H1 (cell line): ENCODE measurements at regions of chr12 and their contacts with region 1.

Region 1: GRCh38 chr12:112108201-112109079 is at the start of gene NAA25:
- DNase-seq: peak; percentile 80 to 96
- H3K4me3 ChIP-seq: peak within 1 kb of the TSS; percentile 82 to 98 (median 88)
- H3K27ac ChIP-seq: peak within 1 kb of the TSS; percentile 85
- H3K4me1 ChIP-seq: peaks cover 10 to 21% (median 17%) of the 10 kb centered on the region in 4 experiments; a peak in 6 of 7 replicates
- H3K27me3 ChIP-seq: no peaks in the 10 kb centered on the region
- CTCF ChIP-seq: no peak
- EP300 ChIP-seq: no peak
- POLR2A ChIP-seq: peak; percentile 62 to 80; a peak in 1 of 3 replicates
- RAD21 ChIP-seq: no peak
- total RNA-seq, gene NAA25: 53.4 and 60.3 TPM in 2 replicates

Region 2: DNA sequence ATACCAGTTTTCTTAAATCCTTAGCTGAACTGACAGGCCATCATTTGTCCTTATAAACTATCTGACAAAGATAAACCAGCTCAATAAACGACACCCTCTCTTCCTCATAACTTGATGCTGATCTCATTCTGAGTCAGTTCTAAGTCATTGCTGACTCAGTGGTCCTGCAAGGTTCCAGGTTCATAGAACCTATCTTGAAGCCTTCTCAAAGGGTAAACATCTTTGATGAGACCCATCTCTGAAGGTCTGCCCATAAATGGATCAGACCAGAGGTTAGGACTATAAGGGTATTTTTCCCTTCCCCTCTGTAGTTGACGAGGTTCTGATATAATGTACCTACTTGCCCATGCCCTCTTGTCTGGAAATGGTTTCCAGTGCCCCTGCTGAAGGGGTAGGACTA is 11.8 kb before region 1 on chr12:
- CTCF ChIA-PET with region 1: no interaction called
- POLR2A ChIA-PET with region 1: interaction called, 44 read pairs
- DNase-seq: no peak
- H3K4me3 ChIP-seq: no peak overlapping the region
- H3K27ac ChIP-seq: no peak overlapping the region
- H3K4me1 ChIP-seq: no peaks in the 10 kb centered on the region
- H3K27me3 ChIP-seq: no peaks in the 10 kb centered on the region
- CTCF ChIP-seq: no peak
- EP300 ChIP-seq: no peak
- POLR2A ChIP-seq: no peak
- RAD21 ChIP-seq: no peak

Region 3: DNA sequence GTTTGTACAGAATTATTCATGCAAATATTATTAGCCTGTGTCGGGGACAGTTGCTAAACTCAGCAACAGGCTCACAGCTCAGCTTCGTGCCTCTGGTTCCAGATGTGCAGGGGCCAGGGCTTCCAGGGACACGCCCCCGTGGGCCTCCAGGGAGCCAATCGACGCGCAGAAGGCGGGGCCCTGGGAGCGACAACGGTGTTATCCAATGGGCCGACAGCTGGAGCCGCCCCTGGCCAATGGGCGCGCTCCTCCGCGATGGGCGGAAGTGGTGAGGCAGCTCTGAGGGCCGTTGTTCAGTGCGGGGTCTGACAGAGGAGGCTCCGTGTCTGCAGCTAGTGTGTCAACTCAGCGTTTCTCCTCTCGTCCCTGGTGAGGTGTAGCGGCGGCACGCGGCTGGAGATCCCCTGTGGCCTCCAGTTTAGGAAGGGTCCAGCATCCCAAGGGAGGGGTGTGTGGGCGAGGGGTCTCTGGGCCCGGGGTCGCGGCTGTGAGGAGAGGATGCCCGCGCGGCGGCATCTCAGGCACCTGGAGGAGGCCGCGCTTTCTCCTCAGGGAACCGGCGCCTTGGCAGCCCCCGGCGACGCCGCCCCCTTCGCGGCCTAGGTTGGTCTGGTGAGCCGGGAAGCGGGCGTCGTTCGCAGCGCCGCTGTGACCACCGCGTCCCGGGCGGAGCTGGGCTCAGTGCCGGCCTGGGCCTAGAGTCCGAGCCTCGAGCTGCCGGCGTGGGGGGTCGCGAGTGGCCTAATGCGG is 17.0 kb after region 1 on chr12 and contains the start of gene TRAFD1:
- CTCF ChIA-PET with region 1: interaction called, 7 read pairs
- POLR2A ChIA-PET with region 1: interaction called, 90 read pairs
- DNase-seq: peak; percentile 88 to 99
- H3K4me3 ChIP-seq: peak within 1 kb of the TSS; percentile 51 to 87 (median 82)
- H3K27ac ChIP-seq: no peak within 1 kb of the TSS
- H3K4me1 ChIP-seq: peaks cover 0 to 4% (median 1%) of the 10 kb centered on the region in 4 experiments; a peak in 4 of 7 replicates
- H3K27me3 ChIP-seq: no peaks in the 10 kb centered on the region
- CTCF ChIP-seq: no peak
- EP300 ChIP-seq: no peak
- POLR2A ChIP-seq: peak in 1 of 2 experiments; percentile 81; a peak in 2 of 3 replicates
- RAD21 ChIP-seq: no peak
- total RNA-seq, gene TRAFD1: 33.1 and 36.3 TPM in 2 replicates

Region 4: DNA sequence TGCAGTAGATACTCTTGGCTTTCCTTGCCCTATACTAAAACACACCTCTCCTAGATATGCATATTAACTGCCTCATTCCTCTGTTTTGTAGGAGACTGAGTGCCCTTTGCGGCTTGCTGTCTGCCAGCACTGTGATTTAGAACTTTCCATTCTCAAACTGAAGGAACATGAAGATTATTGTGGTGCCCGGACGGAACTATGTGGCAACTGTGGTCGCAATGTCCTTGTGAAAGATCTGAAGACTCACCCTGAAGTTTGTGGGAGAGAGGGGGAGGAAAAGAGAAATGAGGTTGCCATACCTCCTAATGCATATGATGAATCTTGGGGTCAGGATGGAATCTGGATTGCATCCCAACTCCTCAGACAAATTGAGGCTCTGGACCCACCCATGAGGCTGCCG is 32.3 kb after region 1 on chr12:
- CTCF ChIA-PET with region 1: no interaction called
- POLR2A ChIA-PET with region 1: no interaction called
- DNase-seq: no peak
- H3K4me3 ChIP-seq: no peak overlapping the region
- H3K27ac ChIP-seq: no peak overlapping the region
- H3K4me1 ChIP-seq: no peaks in the 10 kb centered on the region
- H3K27me3 ChIP-seq: no peaks in the 10 kb centered on the region
- CTCF ChIP-seq: no peak
- EP300 ChIP-seq: no peak
- POLR2A ChIP-seq: no peak
- RAD21 ChIP-seq: no peak